HCT116 (cell line): ENCODE measurements at regions of chr9 and their contacts with region 1.

Region 1: DNA sequence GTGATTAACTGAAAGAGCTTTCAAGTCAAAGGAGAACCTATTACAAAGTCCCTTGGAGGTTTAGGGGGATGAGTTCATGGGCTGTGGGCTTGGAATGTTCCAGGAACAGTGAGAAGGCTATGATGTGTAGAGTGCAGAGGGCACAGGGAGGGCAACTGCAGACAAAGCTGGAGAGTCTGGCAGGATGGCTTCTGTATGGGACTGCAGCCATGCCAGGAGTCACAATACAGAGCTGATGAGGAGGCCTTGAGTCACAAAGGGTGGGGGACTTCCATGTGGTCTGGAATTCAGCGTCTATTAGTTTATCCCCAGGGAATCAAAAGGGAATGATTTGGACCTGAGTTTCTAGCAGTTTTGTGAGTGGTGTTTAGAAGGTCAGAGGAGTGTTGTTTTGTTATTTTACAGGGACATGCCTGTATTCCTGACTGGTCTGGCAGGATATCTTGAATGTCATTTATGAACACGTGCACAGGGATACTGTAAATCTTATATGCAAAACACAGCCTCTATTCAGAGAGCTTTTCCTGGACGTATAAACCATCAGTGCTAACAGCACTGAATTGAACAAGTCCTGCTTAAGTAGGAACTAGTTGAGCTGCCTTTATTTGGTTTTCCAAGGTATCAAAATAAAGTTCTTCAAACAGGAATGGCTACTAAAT is 14.3 kb upstream of the TEK start:
- DNase-seq: no peak
- ATAC-seq: no peak
- H3K4me3 ChIP-seq: no peak overlapping the region
- H3K27ac ChIP-seq: no peak overlapping the region
- H3K4me1 ChIP-seq: peaks cover 0 to 4% of the 10 kb centered on the region in 2 experiments; a peak in 2 of 4 replicates
- H3K27me3 ChIP-seq: no peaks in the 10 kb centered on the region
- CTCF ChIP-seq: no peak
- POLR2A ChIP-seq: no peak
- RAD21 ChIP-seq: no peak

Region 2: GRCh38 chr9:27019589-27019988 is 75.2 kb before region 1 on chr9:
- CTCF ChIA-PET with region 1: no interaction called
- POLR2A ChIA-PET with region 1: no interaction called
- RAD21 ChIA-PET with region 1: no interaction called
- intact Hi-C with region 1: loop called (anchors 2 kb)
- DNase-seq: no peak
- ATAC-seq: no peak
- H3K4me3 ChIP-seq: no peak overlapping the region
- H3K27ac ChIP-seq: no peak overlapping the region
- H3K4me1 ChIP-seq: no peaks in the 10 kb centered on the region
- H3K27me3 ChIP-seq: no peaks in the 10 kb centered on the region
- CTCF ChIP-seq: no peak
- POLR2A ChIP-seq: no peak
- RAD21 ChIP-seq: no peak